Right ventricle myocardium superior (tissue), 1 donor: ENCODE measurements at regions of chr11 and their contacts with region 1.

Region 1: GRCh38 chr11:60242740-60243239 is at the start of gene MS4A4E:
- DNase-seq: no peak
- ATAC-seq: peak; percentile 68
- total RNA-seq, gene MS4A4E: 1.1 TPM

Region 2: DNA sequence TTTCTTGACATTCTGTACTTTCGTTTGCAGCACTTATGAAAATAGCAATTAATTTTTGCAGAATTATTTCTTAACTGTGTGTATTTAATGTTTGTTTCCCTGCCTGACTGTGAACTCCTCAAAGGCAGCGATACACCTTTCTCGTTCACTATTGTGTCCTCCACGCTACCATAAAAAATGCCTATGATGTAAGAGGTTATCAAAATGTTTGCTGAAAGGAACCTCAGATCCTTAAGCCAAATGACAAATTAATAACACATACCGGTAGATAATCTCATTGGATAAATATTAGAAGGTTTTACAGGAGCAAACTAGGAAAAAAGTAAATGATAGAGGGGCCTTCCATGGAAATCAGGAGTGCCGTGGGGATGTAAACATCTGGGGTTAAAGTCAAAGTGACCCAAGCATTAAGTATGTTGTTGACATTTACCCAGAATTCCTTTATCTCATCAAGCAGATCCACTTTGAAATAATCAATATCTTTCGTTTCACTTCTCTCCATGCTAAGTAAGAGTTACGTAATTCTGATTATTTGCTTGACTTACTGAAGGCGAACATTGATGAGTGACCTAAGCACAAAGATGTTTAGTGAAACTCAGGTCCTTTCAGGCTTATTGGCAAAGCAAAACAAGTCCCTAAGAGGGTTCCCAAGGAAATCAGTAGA is 366.8 kb before region 1 on chr11:
- intact Hi-C with region 1: no loop called
- DNase-seq: no peak
- ATAC-seq: no peak

Region 3: DNA sequence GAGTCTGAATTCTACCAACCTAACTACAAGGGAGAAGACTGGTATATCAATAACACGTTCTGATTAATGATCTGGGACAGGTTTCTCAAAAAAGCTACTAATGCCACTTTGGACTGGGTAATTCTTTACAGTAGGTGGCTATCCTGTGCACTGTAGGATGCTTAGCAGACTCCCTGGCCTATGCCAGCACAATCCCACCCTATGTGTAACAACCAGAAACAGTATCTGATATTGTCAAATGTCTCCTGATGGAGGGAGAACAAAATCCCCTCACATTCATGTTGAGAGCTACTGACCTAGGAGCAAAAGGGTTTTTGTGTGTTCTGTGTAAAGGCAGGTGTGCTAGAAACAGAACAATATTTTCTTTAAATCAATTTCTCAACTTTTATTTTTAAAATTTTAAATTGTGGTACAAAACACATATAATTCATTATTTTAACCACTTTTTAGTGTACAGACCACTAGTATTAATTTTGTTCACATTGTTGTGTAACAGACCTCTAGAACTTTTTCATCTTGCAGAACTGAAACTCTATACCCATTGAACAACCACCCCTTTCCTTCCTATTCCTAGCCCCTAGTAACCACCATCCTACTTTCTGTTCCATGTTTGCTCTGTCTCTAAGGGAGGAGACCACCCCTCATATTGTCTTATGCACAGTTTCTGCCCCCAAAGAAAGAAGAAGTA is 57.8 kb before region 1 on chr11:
- intact Hi-C with region 1: loop called (anchors 10 kb)
- DNase-seq: no peak
- ATAC-seq: peak; percentile 61

Region 4: GRCh38 chr11:60204922-60205321 is 37.9 kb before region 1 on chr11:
- intact Hi-C with region 1: no loop called
- DNase-seq: no peak
- ATAC-seq: no peak

Region 5: GRCh38 chr11:60280412-60280811 is 37.6 kb after region 1 on chr11 and contains the start of gene MS4A4A:
- intact Hi-C with region 1: no loop called
- DNase-seq: no peak
- ATAC-seq: peak; percentile 85
- total RNA-seq, gene MS4A4A: 15.2 TPM